ENCODE measurements at regions of chr17 and their contacts with region 1.

Region 1: GRCh38 chr17:41966463-41967140 is at the start of gene CNP:
- DNase-seq: peak; percentile 97
- H3K4me3 Mint-ChIP-seq: peak within 1 kb of the TSS; percentile 81
- H3K27ac Mint-ChIP-seq: peak within 1 kb of the TSS; percentile 84
- H3K4me1 Mint-ChIP-seq: peaks cover 32% of the 10 kb centered on the region
- H3K27me3 Mint-ChIP-seq: peaks cover 3% of the 10 kb centered on the region
- total RNA-seq, gene CNP: 81.6 and 84.1 TPM in 2 replicates

Region 2: DNA sequence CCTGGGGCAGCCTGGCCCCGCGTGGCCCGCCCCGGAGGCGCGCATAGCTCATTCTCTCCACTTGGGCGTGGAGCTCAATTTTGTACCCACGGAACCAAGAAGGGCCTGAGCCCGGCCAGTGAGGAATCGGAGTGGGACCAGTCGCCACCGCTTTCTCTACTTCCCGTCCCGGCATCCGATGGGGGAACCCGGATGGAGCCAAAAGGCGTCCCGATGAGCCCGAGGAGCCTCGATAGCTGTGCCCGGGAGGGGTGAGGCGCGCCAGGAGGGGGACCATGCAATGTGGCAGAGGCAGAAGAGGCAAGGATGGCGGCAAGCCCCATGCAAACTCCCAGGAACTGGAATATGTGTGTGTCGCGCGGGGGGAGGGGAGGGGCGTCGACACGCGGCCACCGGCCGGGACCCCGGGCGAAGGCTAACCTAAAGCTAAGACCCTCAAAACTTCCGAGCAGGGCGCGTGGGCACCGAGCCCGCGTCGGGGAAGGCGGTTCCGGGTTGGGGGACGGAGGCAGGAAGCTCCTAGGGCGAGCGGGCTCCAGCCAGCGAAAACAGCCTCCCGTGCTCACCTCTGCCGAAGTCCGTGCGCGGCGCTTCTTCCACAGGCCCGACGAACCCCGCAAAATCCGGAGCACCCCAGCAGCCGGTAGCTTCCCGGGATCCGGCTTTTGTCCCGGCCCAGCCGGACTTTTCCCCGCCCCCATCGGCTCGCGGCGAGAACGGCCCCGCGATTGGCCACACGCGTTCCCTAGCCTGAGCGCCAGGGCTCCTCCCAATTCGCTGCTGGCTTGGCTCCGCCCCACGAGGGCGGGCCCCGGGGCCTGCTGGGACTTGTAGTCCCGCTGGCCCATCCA is 48.1 kb before region 1 on chr17 and contains the start of gene ACLY:
- intact Hi-C with region 1: loop called (anchors 1 kb)
- DNase-seq: peak; percentile 100
- H3K4me3 Mint-ChIP-seq: peak within 1 kb of the TSS; percentile 98
- H3K27ac Mint-ChIP-seq: peak within 1 kb of the TSS; percentile 95
- H3K4me1 Mint-ChIP-seq: peaks cover 26% of the 10 kb centered on the region
- H3K27me3 Mint-ChIP-seq: no peaks in the 10 kb centered on the region
- total RNA-seq, gene ACLY: 225 and 229 TPM in 2 replicates

Region 3: DNA sequence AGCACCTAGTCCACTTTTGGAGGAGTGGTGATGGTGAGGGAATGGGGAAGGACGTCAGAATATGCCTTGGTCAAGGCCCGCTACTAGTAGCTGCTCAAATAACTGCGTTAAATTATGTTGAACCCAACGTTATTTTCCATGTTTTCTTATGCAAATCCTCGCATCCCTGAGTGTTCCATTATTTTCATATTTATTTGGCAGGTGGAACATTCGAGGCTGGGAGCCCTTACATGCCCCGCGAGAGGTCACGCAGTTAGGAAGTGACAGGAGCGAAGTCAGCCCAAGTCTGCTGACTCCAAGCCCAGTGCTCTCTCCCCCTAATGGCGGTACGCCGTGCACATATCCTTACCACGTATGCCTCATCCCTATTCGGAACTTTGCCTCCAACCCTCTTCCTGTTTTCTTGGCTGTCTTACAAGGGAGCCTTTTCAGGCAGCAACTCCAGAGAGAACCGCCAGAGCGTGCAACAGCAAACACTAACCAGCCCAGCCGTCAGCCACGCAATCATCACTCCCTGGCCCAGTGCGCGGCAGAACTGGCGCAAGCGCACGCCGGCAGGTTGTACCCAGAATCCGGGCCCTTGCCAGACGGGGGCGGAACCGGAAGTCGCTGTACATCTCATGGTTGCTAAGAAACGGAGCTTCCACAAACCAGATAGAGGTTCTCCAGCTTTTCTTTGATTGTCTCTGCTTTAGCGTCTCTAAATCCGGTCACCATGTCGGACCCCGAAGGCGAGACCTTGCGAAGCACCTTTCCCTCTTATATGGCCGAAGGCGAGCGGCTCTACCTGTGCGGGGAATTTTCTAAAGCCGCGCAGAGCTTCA is 36.4 kb before region 1 on chr17 and contains the start of gene ODAD4:
- intact Hi-C with region 1: loop called (anchors 1 kb)
- DNase-seq: peak; percentile 99
- H3K4me3 Mint-ChIP-seq: peak within 1 kb of the TSS; percentile 95
- H3K27ac Mint-ChIP-seq: peak within 1 kb of the TSS; percentile 96
- H3K4me1 Mint-ChIP-seq: peaks cover 31% of the 10 kb centered on the region
- H3K27me3 Mint-ChIP-seq: no peaks in the 10 kb centered on the region
- total RNA-seq, gene ODAD4: 0.63 and 0.76 TPM in 2 replicates

Region 4: GRCh38 chr17:42019509-42020404 is 53.2 kb after region 1 on chr17 and contains the start of gene NKIRAS2:
- intact Hi-C with region 1: loop called (anchors 1 kb)
- DNase-seq: peak; percentile 99
- H3K4me3 Mint-ChIP-seq: peak within 1 kb of the TSS; percentile 99
- H3K27ac Mint-ChIP-seq: peak within 1 kb of the TSS; percentile 85
- H3K4me1 Mint-ChIP-seq: peaks cover 47% of the 10 kb centered on the region
- H3K27me3 Mint-ChIP-seq: no peaks in the 10 kb centered on the region
- total RNA-seq, gene NKIRAS2: 29.5 and 30.3 TPM in 2 replicates

Region 5: DNA sequence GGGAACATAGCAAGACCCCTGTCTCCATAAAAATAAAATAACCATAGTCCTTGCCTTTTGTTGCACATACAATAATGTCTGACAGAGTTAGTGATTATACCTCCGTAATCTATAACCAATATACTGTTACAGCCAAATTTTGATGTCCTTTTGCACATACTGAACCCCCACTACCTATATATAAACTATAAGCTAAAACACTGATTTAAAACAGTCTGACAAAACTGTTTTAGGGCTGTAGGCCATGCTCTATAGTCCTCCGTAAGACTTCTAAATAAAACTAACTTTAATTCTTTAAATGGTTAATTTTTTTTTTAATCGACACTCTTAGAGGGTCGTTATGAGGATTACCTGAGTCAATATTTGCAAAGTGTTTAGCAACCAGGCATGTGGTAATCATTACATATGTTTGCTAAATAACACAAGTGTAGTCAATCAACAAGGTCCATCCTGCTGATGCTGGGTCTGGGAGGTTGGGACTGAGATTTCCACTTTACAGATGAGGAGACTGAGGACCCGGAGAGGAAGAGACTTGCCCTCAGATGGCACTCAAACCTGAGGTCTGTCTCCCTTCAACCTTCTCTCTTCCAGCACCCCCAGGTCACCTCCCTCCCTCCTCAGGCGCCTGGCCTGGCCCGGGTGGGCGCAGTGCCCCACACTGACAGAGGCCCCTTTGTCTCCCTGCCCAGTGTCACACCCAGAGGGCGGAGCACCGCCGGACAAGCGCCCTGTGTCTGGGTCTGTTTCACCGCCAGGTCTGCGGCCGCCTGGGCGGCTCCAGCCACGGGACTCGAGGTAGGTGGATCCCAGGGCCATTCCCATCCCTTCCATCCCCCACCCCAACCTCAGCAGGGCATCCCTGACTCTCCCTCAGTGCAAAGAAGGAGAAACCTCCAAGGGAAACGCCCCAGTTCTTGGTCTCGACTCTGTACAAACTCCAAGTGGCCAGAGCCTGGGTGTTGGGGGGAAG is 121.4 kb after region 1 on chr17:
- intact Hi-C with region 1: no loop called
- DNase-seq: no peak
- H3K4me3 Mint-ChIP-seq: no peak overlapping the region
- H3K27ac Mint-ChIP-seq: no peak overlapping the region
- H3K4me1 Mint-ChIP-seq: no peaks in the 10 kb centered on the region
- H3K27me3 Mint-ChIP-seq: peaks cover 22% of the 10 kb centered on the region

Region 6: GRCh38 chr17:42101513-42102319 is 135.1 kb after region 1 on chr17:
- intact Hi-C with region 1: loop called (anchors 2 kb)
- DNase-seq: peak; percentile 91
- H3K4me3 Mint-ChIP-seq: no peak overlapping the region
- H3K27ac Mint-ChIP-seq: no peak overlapping the region
- H3K4me1 Mint-ChIP-seq: peaks cover 7% of the 10 kb centered on the region
- H3K27me3 Mint-ChIP-seq: peaks cover 16% of the 10 kb centered on the region

Region 7: DNA sequence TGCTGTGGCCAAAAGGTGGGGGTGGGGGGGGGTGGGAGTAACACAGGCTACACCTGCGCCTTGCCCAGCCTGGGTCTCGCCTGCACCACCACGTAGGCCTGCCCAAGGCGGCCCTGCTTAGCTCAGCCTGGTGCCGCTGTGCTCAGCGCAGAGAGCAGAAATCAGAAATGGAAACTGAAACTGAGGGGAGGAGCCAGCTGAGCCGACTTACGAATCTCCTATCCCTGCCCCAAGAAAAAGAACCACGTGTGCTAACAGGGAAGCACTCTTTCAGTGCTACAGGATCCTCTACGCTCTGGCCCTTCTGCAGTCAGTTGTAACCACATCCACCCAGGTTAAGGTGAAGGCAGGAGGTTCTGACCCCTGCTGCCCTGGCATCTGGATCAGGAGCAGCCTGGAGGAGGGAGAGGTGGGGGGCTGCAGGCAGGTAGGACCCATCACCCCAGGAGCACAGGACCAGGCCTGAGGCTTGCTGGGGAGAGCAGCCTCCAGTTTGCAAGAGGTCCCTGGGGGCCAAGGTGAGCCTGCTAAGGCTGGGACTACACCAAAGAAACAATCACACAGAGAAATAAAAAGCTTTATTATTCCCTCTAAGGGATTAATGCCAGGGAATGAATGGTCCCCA is 146.1 kb after region 1 on chr17 and contains the start of gene DHX58:
- intact Hi-C with region 1: loop called (anchors 2 kb)
- DNase-seq: peak; percentile 96
- H3K4me3 Mint-ChIP-seq: peak within 1 kb of the TSS; percentile 94
- H3K27ac Mint-ChIP-seq: peak within 1 kb of the TSS; percentile 93
- H3K4me1 Mint-ChIP-seq: peaks cover 42% of the 10 kb centered on the region
- H3K27me3 Mint-ChIP-seq: no peaks in the 10 kb centered on the region
- total RNA-seq, gene DHX58: 22.9 and 25.8 TPM in 2 replicates

Region 8: DNA sequence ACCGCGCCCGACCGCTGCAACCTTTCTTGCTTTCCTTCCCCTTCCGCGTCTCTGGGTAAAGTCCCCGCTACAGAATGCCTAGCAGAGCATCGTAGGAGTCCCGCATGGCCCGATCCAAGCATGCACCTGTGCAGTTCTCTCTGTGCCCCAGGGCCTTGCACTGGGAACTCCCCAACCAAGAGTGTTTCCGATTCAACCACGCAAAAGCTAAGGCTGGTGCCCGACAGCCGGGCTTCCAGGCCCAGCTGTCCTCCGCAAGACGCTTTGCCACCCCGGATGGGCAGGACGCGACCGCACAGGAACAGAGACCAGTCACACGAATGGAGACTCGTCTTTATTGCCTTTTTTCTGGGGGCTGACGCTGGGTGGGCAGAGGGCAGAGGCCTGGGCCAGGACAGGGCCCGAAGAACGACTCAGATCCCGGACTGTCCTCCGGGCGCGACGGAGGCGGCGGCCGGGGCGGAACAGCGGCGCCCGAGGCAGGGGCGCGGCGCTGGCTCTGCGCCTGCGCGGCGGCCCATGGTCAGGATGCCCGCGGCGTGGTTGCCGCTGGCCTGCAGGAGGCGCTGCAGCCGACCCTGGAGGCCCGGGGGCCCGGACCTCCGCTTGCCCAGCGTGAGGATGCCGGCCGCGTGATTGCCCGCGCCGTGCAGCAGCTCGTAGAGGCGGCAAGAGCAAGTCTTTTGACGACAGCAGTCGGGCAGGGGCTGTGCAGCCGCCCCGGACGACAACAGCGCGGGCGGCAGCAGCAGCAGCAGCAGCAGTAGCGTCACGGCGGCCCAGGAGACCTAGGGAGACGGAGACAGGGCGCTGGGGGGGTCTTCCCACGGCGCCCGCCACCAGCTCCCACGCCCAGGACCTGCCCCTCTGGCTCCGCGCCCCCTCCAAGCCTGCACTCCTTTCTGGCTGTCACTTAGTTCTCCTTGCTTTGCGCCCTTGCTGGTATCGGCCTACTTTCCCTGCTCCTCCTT is 217.4 kb after region 1 on chr17:
- intact Hi-C with region 1: loop called (anchors 10 kb)
- DNase-seq: peak; percentile 96
- H3K4me3 Mint-ChIP-seq: peak overlapping the region; percentile 89
- H3K27ac Mint-ChIP-seq: peak overlapping the region; percentile 93
- H3K4me1 Mint-ChIP-seq: peaks cover 34% of the 10 kb centered on the region
- H3K27me3 Mint-ChIP-seq: peaks cover 17% of the 10 kb centered on the region

Region 9: DNA sequence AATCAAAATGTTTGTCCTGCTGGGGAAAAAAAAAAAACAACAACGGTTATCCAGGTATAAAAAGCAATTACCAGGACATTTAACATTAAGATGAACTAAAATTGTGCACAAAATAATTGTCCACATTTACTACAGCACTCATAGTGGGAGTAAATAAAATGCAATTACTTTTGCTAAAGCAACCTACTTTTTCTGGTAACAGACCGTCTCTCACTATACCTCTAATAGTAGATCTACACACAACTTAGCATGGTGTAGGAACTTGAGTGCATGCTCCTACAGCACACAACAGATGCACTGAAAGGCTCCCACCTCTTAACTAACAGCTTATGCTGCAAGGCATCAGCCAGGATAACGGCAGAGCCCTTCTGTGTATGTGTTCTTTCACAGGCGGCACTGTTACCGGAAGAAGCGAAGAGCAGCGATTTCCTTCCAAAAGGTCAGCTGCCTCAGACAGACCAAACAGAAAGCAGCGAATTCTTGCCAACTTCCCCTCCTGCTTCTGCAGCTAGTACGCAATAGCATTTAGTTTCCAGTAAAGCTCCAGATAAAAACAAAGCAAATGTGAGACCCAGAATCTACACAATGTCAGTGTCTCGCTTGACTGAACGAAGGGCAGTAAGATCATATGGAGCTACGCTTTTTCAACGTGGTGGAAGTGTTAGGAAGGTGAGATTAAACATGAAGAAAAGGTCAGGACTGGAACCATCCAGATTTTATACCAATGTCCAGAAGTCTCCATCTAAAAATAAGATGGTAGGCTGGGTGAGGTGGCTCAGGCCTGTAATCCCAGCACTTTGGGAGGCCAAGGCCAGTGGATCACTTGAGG is 282.0 kb after region 1 on chr17:
- intact Hi-C with region 1: no loop called
- DNase-seq: peak; percentile 94
- H3K4me3 Mint-ChIP-seq: peak overlapping the region; percentile 87
- H3K27ac Mint-ChIP-seq: peak overlapping the region; percentile 98
- H3K4me1 Mint-ChIP-seq: peaks cover 58% of the 10 kb centered on the region
- H3K27me3 Mint-ChIP-seq: no peaks in the 10 kb centered on the region

Measured in activated CD4-positive, alpha-beta T cell treated with anti-CD3 and anti-CD28 coated beads, Interleukin-2, amount 10 ng/mL, durations not matched to agents 24 days and 14 days (primary cell).